Aorta (tissue), 5 donors: ENCODE measurements at regions of chr19 and their contacts with region 1.

Region 1: GRCh38 chr19:9309139-9309973 is at the start of gene ZNF699:
- DNase-seq: peak; percentile 99 to 100
- ATAC-seq: peak; percentile 99
- H3K4me3 ChIP-seq: peak within 1 kb of the TSS; percentile 60 to 80
- H3K27ac ChIP-seq: peak within 1 kb of the TSS; percentile 63 to 79
- H3K4me1 ChIP-seq: no peaks in the 10 kb centered on the region
- H3K27me3 ChIP-seq: no peaks in the 10 kb centered on the region
- total RNA-seq, gene ZNF699: 12.1 to 12.4 TPM

Region 2: GRCh38 chr19:9251236-9251635 is 58.1 kb before region 1 on chr19:
- intact Hi-C with region 1: no loop called
- DNase-seq: no peak
- ATAC-seq: no peak
- H3K4me3 ChIP-seq: no peak overlapping the region
- H3K27ac ChIP-seq: no peak overlapping the region
- H3K4me1 ChIP-seq: no peaks in the 10 kb centered on the region
- H3K27me3 ChIP-seq: no peaks in the 10 kb centered on the region

Region 3: GRCh38 chr19:9323919-9324583 is 14.7 kb after region 1 on chr19 and contains the start of gene ZNF559:
- intact Hi-C with region 1: loop called in 1 of 2 experiments (anchors 1 kb)
- DNase-seq: peak; percentile 96 to 98
- ATAC-seq: peak; percentile 100
- H3K4me3 ChIP-seq: peak within 1 kb of the TSS; percentile 54 to 69
- H3K27ac ChIP-seq: peak within 1 kb of the TSS; percentile 72 to 78
- H3K4me1 ChIP-seq: no peaks in the 10 kb centered on the region
- H3K27me3 ChIP-seq: no peaks in the 10 kb centered on the region
- total RNA-seq, gene ZNF559: 15.4 to 31.1 TPM

Region 4: DNA sequence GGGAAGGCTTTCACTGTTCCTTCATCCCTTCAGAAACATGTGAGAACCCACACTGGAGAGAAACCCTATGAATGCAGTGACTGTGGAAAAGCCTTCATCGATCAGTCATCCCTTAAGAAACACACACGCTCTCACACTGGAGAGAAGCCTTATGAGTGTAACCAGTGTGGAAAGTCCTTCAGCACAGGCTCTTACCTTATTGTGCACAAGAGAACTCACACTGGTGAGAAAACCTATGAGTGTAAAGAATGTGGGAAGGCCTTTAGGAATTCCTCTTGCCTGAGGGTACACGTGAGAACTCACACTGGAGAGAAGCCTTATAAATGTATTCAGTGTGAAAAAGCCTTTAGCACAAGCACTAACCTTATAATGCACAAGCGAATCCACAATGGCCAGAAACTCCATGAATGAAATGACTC is 72.0 kb after region 1 on chr19:
- intact Hi-C with region 1: no loop called
- DNase-seq: no peak
- ATAC-seq: no peak
- H3K4me3 ChIP-seq: no peak overlapping the region
- H3K27ac ChIP-seq: no peak overlapping the region
- H3K4me1 ChIP-seq: no peaks in the 10 kb centered on the region
- H3K27me3 ChIP-seq: no peaks in the 10 kb centered on the region

Region 5: GRCh38 chr19:9435279-9436268 is 126.2 kb after region 1 on chr19 and contains the start of gene ZNF266:
- intact Hi-C with region 1: loop called in 1 of 2 experiments (anchors 10 kb)
- DNase-seq: peak; percentile 93 to 96
- ATAC-seq: peak; percentile 94
- H3K4me3 ChIP-seq: peak within 1 kb of the TSS; percentile 43 to 99
- H3K27ac ChIP-seq: peak within 1 kb of the TSS in 1 of 2 donors; percentile 49
- H3K4me1 ChIP-seq: no peaks in the 10 kb centered on the region
- H3K27me3 ChIP-seq: no peaks in the 10 kb centered on the region
- total RNA-seq, gene ZNF266: 28.2 to 35.1 TPM

Region 6: DNA sequence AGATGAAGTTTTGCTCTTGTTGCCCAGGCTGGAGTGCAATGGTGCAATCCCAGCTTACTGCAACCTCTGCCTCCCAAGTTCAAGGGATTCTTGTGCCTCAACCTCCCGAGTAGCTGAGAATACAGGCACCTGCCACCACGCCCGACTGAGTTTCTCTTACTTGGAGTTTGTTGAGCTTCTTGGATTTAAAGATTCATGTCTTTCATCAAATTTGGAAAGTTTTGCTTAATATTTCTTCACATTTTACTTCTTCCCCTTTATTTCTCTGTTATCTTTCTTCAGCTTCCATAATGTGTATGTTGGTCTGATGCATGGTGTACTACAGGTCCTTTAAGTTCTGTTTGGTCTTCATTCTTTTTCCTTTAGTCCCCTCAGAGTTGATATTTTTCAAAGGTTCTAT is 197.9 kb after region 1 on chr19:
- intact Hi-C with region 1: no loop called
- DNase-seq: no peak
- ATAC-seq: no peak
- H3K4me3 ChIP-seq: no peak overlapping the region
- H3K27ac ChIP-seq: no peak overlapping the region
- H3K4me1 ChIP-seq: no peaks in the 10 kb centered on the region
- H3K27me3 ChIP-seq: no peaks in the 10 kb centered on the region

Region 7: GRCh38 chr19:9584073-9584833 is 274.9 kb after region 1 on chr19 and contains the start of gene ZNF121:
- intact Hi-C with region 1: loop called in 1 of 2 experiments (anchors 10 kb)
- DNase-seq: peak; percentile 91 to 95
- ATAC-seq: peak; percentile 98
- H3K4me3 ChIP-seq: peak within 1 kb of the TSS; percentile 52 to 56
- H3K27ac ChIP-seq: peak within 1 kb of the TSS in 1 of 2 donors; percentile 58
- H3K4me1 ChIP-seq: peaks cover 2 to 3% of the 10 kb centered on the region in 2 donors
- H3K27me3 ChIP-seq: no peaks in the 10 kb centered on the region
- total RNA-seq, gene ZNF121: 28.4 to 31.2 TPM